ENCODE measurements at regions of chr9 and their contacts with region 1.

Region 1: DNA sequence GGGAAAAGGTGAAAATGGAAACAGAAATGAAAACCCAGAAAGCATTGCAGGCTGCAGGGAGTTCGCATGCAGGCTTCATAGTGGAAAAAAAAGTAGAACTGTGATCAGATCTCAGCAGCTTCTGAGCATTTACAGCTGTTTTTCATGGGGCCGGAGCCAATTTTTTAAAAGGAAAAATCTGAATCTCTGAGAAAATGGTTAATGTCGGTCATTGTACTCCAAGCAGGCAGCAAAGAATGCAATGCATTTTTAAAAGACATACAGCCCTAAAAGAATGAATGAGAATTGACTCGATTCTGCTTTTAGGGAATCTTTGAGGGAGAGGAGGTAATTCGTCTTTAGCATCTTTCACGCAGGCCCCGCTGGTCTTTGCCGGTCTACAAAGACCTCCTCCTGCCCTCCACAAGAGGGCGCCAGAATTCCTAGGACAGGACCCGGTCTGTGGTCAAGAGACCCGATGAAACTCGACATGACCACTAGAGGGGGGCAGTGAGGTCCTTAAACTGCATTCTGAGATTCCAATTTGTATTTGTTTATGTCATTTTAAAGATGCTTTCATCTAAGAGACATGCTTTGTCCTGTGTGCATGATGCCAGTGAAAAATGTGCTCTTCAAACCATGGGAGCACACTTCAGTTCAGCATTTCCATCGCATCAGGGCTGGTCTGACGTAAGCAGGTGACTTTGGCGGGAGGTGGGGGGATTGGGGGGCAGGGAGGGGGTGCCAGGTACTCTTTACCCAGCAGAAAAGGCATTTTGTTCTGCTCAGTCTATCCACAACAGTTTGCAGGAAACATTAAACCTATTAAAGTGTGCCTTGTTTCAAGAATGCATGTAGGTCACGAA is 43.7 kb upstream of the TMEM252 start:
- DNase-seq: peak; percentile 89 to 91 (median 90)
- ATAC-seq: peak; percentile 99
- H3K4me3 ChIP-seq: no peak overlapping the region
- H3K27ac ChIP-seq: no peak overlapping the region
- H3K4me1 ChIP-seq: no peaks in the 10 kb centered on the region
- H3K27me3 ChIP-seq: no peaks in the 10 kb centered on the region
- CTCF ChIP-seq: peak; percentile 97 to 99 (median 99)
- POLR2A ChIP-seq: no peak

Region 2: DNA sequence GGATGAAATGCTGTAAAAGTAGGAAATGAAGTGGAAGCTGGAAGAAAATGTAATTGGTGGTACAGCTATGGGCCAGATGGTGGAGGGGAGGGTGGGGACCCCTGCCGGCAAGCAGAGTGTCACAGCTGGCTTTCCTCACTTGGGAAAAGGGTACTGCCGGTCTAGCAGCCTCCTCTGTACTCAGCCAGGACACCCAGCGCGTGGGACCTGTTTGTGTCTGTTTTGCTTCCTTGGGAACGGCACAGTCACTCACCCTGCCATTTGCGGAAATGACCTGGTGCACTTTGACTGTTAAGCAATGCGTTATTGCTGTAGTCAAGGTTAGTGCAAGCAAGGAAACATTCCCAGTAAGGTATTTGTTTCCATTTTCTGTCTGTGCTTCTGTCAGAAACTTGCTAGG is 53.8 kb before region 1 on chr9:
- intact Hi-C with region 1: no loop called
- DNase-seq: peak; percentile 52 to 73 (median 58)
- ATAC-seq: peak; percentile 90
- H3K4me3 ChIP-seq: no peak overlapping the region
- H3K27ac ChIP-seq: peak overlapping the region in 1 of 4 donors; percentile 35
- H3K4me1 ChIP-seq: no peaks in the 10 kb centered on the region
- H3K27me3 ChIP-seq: no peaks in the 10 kb centered on the region
- CTCF ChIP-seq: no peak
- POLR2A ChIP-seq: no peak

Region 3: DNA sequence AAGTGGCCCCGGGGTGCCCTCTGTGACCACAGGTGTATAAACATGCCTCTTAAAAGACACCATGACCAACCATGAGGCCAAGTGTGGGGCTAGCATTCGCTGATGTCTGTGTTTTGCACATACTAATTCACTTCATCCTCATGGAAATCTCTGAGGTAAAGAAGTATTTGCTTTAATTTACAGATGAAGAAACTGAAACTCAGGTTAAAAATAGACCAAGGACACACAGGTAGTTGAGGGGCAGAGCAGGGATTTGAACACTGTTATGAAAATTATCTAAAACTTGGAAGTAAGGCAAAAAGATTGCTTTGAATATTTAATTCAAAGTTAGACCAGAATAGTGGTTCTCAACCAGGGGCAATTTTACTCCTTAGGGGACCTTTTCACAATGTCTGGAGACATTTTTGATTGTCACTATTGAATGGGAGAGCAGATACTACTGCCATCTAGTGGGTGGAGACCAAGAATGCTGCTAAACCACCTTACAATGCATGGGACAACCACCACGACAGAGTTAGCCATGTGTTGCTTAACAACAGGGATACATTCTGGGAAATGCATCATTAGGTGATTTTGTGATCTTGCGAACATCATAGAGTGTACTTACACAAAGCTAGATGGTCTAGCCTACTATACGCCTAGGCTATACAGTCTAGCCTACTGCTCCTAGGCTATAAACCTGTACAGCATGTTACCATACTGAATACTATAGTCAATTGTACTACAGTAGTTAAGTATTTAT is 443.1 kb after region 1 on chr9:
- intact Hi-C with region 1: loop called (anchors 5 kb)
- DNase-seq: peak; percentile 42 to 62 (median 50)
- ATAC-seq: peak; percentile 83
- H3K4me3 ChIP-seq: no peak overlapping the region
- H3K27ac ChIP-seq: no peak overlapping the region
- H3K4me1 ChIP-seq: peaks cover 7% of the 10 kb centered on the region
- H3K27me3 ChIP-seq: no peaks in the 10 kb centered on the region
- CTCF ChIP-seq: peak; percentile 57 to 84 (median 80)
- POLR2A ChIP-seq: no peak